Ascending aorta (tissue), 2 donors: ENCODE measurements at regions of chr1 and their contacts with region 1.

Region 1: GRCh38 chr1:89464008-89464407 is 60.6 kb upstream of the LRRC8B start:
- DNase-seq: no peak
- H3K4me3 ChIP-seq: no peak overlapping the region
- H3K27ac ChIP-seq: no peak overlapping the region
- H3K4me1 ChIP-seq: no peaks in the 10 kb centered on the region
- H3K27me3 ChIP-seq: no peaks in the 10 kb centered on the region
- CTCF ChIP-seq: no peak

Region 2: DNA sequence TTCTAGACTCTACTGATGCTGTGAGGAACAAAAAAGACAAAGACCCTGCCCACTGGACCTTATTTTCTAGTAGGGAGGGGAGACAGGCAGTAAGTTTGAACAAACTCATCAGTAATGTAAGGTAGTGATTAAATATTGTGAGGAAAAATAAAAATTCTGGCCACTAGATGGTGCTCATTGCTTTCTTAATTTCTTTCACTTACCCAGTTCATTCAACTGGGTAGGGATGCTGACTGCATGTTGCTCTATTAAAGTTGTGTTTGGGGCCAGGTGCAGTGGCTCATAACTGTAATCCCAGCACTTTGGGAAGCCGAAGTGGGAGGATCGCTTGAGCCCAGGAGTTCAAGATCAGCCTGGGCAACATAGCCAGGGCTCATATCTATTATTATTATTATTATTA is 465.3 kb before region 1 on chr1:
- intact Hi-C with region 1: loop called (anchors 5 kb)
- DNase-seq: no peak
- H3K4me3 ChIP-seq: no peak overlapping the region
- H3K27ac ChIP-seq: no peak overlapping the region
- H3K4me1 ChIP-seq: peaks cover 0 to 2% of the 10 kb centered on the region in 2 donors
- H3K27me3 ChIP-seq: no peaks in the 10 kb centered on the region
- CTCF ChIP-seq: peak; percentile 44 to 58 (median 54)

Region 3: GRCh38 chr1:89483010-89483756 is 19.2 kb after region 1 on chr1:
- intact Hi-C with region 1: no loop called
- DNase-seq: peak in 1 of 2 donors; percentile 82
- H3K4me3 ChIP-seq: no peak overlapping the region
- H3K27ac ChIP-seq: no peak overlapping the region
- H3K4me1 ChIP-seq: no peaks in the 10 kb centered on the region
- H3K27me3 ChIP-seq: no peaks in the 10 kb centered on the region
- CTCF ChIP-seq: peak; percentile 43 to 68 (median 63)